Left lung (tissue), 14 donors: ENCODE measurements at regions of chr19 and their contacts with region 1.

Region 1: GRCh38 chr19:14890643-14891379 is 4.9 kb upstream of the OR7A17 start:
- DNase-seq: no peak
- ATAC-seq: peak; percentile 40
- H3K4me3 ChIP-seq: no peak overlapping the region
- H3K27ac ChIP-seq: no peak overlapping the region
- H3K4me1 ChIP-seq: no peaks in the 10 kb centered on the region
- H3K27me3 ChIP-seq: peaks cover 0 to 32% of the 10 kb centered on the region in 2 donors
- CTCF ChIP-seq: no peak

Region 2: GRCh38 chr19:14786421-14786851 is 104.4 kb before region 1 on chr19:
- intact Hi-C with region 1: loop called in 1 of 2 experiments (anchors 10 kb)
- DNase-seq: peak in 3 of 4 donors; percentile 21 to 93 (median 43)
- ATAC-seq: peak; percentile 61
- H3K4me3 ChIP-seq: no peak overlapping the region
- H3K27ac ChIP-seq: peak overlapping the region in 1 of 2 donors; percentile 85
- H3K4me1 ChIP-seq: peaks cover 0 to 57% of the 10 kb centered on the region in 2 donors
- H3K27me3 ChIP-seq: peaks cover 0 to 30% of the 10 kb centered on the region in 2 donors
- CTCF ChIP-seq: peak; percentile 73 to 79

Region 3: GRCh38 chr19:14821937-14822336 is 68.9 kb before region 1 on chr19:
- intact Hi-C with region 1: no loop called
- DNase-seq: no peak
- ATAC-seq: no peak
- H3K4me3 ChIP-seq: no peak overlapping the region
- H3K27ac ChIP-seq: no peak overlapping the region
- H3K4me1 ChIP-seq: no peaks in the 10 kb centered on the region
- H3K27me3 ChIP-seq: peaks cover 0 to 27% of the 10 kb centered on the region in 2 donors
- CTCF ChIP-seq: no peak

Region 4: DNA sequence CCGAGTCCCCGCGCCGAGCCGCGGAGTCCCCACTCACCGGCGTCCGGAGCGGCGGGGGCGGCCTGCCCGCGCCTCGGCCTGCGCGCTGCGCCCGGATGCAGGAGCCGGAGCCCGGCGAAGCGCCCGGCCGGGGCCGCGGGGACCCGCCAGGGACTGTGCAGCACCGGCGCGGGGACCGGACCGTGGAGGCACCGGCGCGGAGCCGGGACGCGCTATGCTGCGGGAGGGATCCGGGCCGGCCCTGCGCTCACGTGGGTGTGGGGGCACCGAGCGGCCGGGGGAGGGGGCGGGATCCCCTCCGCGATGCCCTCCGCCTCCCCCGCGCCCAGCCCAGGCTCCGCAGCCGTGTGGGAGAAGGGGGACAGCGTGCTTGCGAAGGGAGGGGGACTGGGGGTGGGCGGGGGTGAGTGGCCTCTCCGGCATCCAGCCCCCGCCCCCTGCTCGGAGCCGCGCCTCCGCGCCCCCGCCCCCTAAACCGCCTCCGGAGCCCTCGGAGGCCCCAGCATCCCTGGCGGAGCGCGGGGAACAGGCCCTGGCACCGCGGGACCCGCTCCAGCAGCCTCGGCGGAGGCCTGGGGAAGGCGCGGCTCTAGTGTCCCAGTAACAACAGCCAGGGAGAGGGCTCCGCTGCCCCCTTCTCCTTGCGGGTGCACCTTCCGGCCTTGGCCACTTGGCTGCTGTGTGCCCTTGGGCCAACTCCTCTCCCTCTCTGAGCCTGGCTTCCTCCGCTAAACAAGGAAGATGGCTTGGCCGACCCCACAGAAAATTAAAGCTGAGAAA is 88.9 kb after region 1 on chr19 and contains the start of gene SLC1A6:
- intact Hi-C with region 1: no loop called
- DNase-seq: no peak
- ATAC-seq: no peak
- H3K4me3 ChIP-seq: no peak within 1 kb of the TSS
- H3K27ac ChIP-seq: no peak within 1 kb of the TSS
- H3K4me1 ChIP-seq: no peaks in the 10 kb centered on the region
- H3K27me3 ChIP-seq: peaks cover 32 to 78% of the 10 kb centered on the region in 2 donors
- CTCF ChIP-seq: no peak
- polyA plus RNA-seq, gene SLC1A6: 0.09 to 0.31 (median 0.17) TPM